Heart right ventricle (tissue), 16 donors: ENCODE measurements at regions of chr22 and their contacts with region 1.

Region 1: DNA sequence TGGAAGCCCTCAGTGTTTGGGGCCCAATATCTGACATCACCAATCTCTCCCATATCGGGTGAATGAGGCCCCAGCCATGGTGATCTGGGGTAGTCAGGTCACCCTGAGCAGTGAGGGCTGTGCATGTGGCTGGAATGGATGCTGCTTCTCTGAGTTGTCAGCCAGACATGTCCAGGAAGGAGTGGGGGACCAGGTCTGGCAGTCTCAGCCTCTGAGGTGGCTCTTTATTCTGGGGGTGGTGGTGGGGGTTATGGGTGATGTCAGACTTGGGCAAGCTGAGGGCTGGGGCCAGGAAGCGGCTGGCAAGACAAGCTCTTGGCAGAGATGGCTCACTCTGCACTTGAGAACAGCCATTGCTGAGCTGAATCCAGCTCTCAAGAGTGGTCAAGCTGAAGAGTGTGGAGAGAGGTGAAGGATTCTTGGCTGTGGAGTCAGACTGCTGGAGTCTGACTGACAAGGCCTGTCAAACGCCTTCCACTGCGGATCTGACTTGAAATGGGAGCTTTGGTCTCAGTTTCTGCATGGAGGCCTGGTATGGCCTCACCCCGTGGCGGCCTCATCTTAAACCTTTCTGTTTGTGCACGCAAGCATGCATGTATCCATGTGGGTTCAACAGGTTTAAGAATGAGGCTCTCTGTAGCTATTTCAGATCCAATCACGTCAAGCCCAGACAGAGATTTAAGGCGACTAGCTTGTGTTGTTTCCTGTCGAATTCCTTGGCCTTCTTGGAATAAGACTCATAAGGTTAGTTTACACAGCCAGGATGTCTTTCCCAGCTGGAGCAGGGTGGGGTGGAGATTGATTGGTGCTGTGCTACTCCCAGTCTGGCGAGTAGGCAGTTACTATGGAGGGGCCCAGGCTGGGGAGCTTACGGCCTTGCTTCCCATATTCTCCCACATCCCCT is 83.9 kb upstream of the TIMP3 start:
- DNase-seq: peak; percentile 29 to 69
- ATAC-seq: peak; percentile 78 to 94 (median 88)
- H3K4me3 ChIP-seq: no peak overlapping the region
- H3K27ac ChIP-seq: peak overlapping the region; percentile 58 to 88 (median 72)
- H3K4me1 ChIP-seq: peaks cover 7 to 49% (median 30%) of the 10 kb centered on the region in 9 donors
- H3K27me3 ChIP-seq: peaks cover 0 to 4% (median 0%) of the 10 kb centered on the region in 7 donors
- CTCF ChIP-seq: no peak

Region 2: GRCh38 chr22:32682990-32683389 is 34.6 kb before region 1 on chr22:
- intact Hi-C with region 1: loop called in 1 of 10 experiments (anchors 1 kb)
- DNase-seq: no peak
- ATAC-seq: no peak
- H3K4me3 ChIP-seq: no peak overlapping the region
- H3K27ac ChIP-seq: no peak overlapping the region
- H3K4me1 ChIP-seq: no peaks in the 10 kb centered on the region
- H3K27me3 ChIP-seq: peaks cover 0 to 6% (median 0%) of the 10 kb centered on the region in 7 donors
- CTCF ChIP-seq: no peak

Region 3: GRCh38 chr22:32764330-32765131 is 46.9 kb after region 1 on chr22:
- intact Hi-C with region 1: loop called in 1 of 10 experiments (anchors 5 kb)
- DNase-seq: peak; percentile 47 to 65
- ATAC-seq: peak; percentile 50 to 83 (median 70)
- H3K4me3 ChIP-seq: no peak overlapping the region
- H3K27ac ChIP-seq: peak overlapping the region; percentile 50 to 88 (median 75)
- H3K4me1 ChIP-seq: peaks cover 14 to 50% (median 46%) of the 10 kb centered on the region in 9 donors
- H3K27me3 ChIP-seq: peaks cover 0 to 13% (median 0%) of the 10 kb centered on the region in 7 donors
- CTCF ChIP-seq: no peak